ENCODE measurements at regions of chr2 and their contacts with region 1.

Region 1: DNA sequence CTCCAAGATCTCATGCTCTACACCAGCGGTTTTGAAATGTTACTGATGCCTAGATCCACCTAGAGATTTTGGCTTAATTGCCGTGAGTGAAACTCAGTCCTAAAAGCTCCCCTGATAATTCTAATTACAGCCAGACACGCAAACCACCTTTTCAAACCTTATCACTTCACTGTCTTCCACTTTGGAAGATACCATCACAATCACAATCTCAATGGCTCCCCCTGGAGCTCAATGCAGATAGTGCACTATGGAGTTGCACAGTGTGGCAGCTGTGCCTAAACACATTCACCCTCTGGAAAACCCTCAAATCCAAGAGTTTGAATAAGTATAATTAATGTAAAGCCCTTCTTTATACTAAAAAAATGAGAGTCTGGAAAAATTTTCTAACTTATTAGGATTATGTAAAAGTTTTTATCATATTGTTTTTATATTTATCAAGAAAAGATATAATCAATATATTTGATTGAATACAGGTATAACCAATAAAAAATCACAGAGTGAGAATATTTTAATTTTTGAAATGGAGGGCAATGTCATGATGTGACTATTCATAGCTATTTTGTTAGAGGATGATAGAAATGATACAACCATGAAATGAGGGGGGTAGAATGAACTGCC is 102.9 kb upstream of the SLC8A1 start:
- DNase-seq: peak; percentile 79
- H3K4me3 Mint-ChIP-seq: no peak overlapping the region
- H3K27ac Mint-ChIP-seq: no peak overlapping the region
- H3K4me1 Mint-ChIP-seq: peaks cover 6% of the 10 kb centered on the region
- H3K27me3 Mint-ChIP-seq: no peaks in the 10 kb centered on the region
- CTCF ChIP-seq: peak; percentile 88

Region 2: DNA sequence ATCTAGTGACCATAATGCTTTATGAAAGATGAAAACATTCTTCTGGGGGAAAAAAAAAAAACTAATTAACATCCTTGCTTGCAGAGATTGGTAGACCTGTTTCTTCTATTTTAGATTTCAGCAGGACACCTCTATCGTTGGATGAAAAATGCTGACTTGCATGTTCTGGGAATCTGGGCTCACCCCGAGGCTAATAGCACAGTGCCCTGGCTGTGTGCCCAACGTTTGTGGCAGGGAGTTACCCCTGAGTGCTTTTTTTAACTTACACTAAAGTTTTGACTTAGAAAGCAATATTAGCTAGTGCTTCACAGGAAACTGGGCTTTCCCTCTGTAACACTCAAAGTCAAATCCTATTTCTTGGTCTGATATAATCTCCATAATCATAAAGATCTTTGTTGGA is 336.1 kb before region 1 on chr2:
- CTCF ChIA-PET with region 1: interaction called, 34 read pairs
- POLR2A ChIA-PET with region 1: no interaction called
- intact Hi-C with region 1: no loop called
- DNase-seq: peak; percentile 75
- H3K4me3 Mint-ChIP-seq: no peak overlapping the region
- H3K27ac Mint-ChIP-seq: no peak overlapping the region
- H3K4me1 Mint-ChIP-seq: peaks cover 15% of the 10 kb centered on the region
- H3K27me3 Mint-ChIP-seq: no peaks in the 10 kb centered on the region
- CTCF ChIP-seq: no peak

Region 3: GRCh38 chr2:40448468-40449079 is 106.2 kb before region 1 on chr2:
- CTCF ChIA-PET with region 1: interaction called, 8 read pairs
- POLR2A ChIA-PET with region 1: no interaction called
- intact Hi-C with region 1: loop called (anchors 1 kb)
- DNase-seq: peak; percentile 54
- H3K4me3 Mint-ChIP-seq: no peak overlapping the region
- H3K27ac Mint-ChIP-seq: no peak overlapping the region
- H3K4me1 Mint-ChIP-seq: peaks cover 17% of the 10 kb centered on the region
- H3K27me3 Mint-ChIP-seq: no peaks in the 10 kb centered on the region
- CTCF ChIP-seq: peak; percentile 45

Region 4: DNA sequence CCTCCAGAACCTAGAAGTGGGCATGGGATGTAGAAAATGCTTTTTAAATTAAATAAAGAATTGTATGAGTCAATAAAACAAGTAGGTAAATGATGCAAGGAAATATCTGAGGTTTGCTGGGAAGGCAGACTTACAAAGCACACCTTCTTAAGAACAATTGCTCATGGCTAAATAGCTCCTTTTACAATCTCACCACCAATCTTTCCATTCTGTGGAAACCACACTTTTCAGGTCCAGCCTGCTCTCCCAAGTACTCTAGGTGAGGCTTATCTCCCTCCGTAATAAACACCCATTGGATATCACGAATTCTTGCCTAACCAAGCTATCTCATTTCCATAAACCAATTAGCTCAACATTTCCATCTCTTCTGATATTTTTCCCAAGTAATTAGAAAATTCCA is 11.4 kb before region 1 on chr2:
- CTCF ChIA-PET with region 1: interaction called, 15 read pairs
- POLR2A ChIA-PET with region 1: no interaction called
- intact Hi-C with region 1: no loop called
- DNase-seq: no peak
- H3K4me3 Mint-ChIP-seq: no peak overlapping the region
- H3K27ac Mint-ChIP-seq: no peak overlapping the region
- H3K4me1 Mint-ChIP-seq: no peaks in the 10 kb centered on the region
- H3K27me3 Mint-ChIP-seq: no peaks in the 10 kb centered on the region
- CTCF ChIP-seq: no peak

Region 5: DNA sequence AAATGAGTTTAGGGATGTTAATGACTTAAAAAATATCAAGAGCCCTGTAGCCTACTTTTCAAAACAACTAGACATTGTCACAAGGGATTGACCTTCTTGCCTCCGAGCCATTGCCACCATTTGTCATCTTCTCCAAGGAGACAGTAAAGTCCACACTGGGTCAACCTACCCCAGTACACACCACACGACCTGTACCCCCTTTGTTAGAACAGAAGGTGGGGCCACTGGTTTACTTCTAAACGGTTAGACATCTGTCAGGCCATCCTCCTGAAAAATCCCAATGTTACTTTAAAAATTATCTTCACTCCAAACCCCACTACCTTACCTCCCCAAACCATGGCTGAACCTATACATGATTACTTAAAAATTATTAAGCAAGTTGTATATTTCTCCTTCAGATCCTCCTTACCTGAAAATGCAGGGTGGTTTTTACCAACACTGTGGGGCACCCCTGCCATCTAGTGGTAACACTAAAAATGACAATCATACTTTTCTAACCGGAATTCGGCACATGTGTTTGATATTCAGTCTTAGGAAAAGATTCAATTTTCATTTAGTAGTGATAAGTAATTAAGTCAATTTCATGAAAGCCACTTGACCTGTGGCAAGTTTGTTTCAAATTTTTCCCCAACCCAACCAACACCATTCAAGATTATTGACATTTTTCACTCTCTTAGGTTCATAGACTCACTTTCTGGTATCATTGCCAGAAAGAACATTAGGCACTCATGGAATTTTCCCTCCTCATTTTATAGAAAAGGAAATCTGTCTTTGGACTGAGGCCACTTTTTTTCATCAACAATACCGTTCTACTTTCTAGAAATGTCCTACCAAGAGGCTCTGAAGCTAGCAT is 1227.8 kb after region 1 on chr2:
- CTCF ChIA-PET with region 1: interaction called, 3 read pairs
- POLR2A ChIA-PET with region 1: no interaction called
- intact Hi-C with region 1: loop called (anchors 10 kb)
- DNase-seq: peak; percentile 56
- H3K4me3 Mint-ChIP-seq: no peak overlapping the region
- H3K27ac Mint-ChIP-seq: no peak overlapping the region
- H3K4me1 Mint-ChIP-seq: no peaks in the 10 kb centered on the region
- H3K27me3 Mint-ChIP-seq: peaks cover 3% of the 10 kb centered on the region
- CTCF ChIP-seq: peak; percentile 75